A549 (cell line): ENCODE measurements at regions of chr21 and their contacts with region 1.

Region 1: GRCh38 chr21:42117229-42117966 is 46.3 kb downstream of the UMODL1 start:
- DNase-seq: peak; percentile 57 to 60
- ATAC-seq: peak; percentile 83 to 89
- H3K4me3 ChIP-seq: no peak overlapping the region
- H3K27ac ChIP-seq: no peak overlapping the region
- H3K4me1 ChIP-seq: peaks cover 7% of the 10 kb centered on the region; the same call in 1 of the 3 replicates
- CTCF ChIP-seq: peak; percentile 67
- EP300 ChIP-seq: no peak
- POLR2A ChIP-seq: no peak
- RAD21 ChIP-seq: peak; percentile 72 to 76

Region 2: GRCh38 chr21:41816220-41817165 is 300.9 kb before region 1 on chr21:
- CTCF ChIA-PET with region 1: interaction called, 24 read pairs
- POLR2A ChIA-PET with region 1: no interaction called
- DNase-seq: peak; percentile 19 to 40
- ATAC-seq: peak; percentile 87 to 93
- H3K4me3 ChIP-seq: no peak overlapping the region
- H3K27ac ChIP-seq: no peak overlapping the region
- H3K4me1 ChIP-seq: no peaks in the 10 kb centered on the region
- CTCF ChIP-seq: peak; percentile 45
- EP300 ChIP-seq: no peak
- POLR2A ChIP-seq: no peak
- RAD21 ChIP-seq: peak; percentile 45 to 65; a peak in 4 of 5 replicates

Region 3: GRCh38 chr21:42164064-42164789 is 46.8 kb after region 1 on chr21:
- CTCF ChIA-PET with region 1: no interaction called
- POLR2A ChIA-PET with region 1: no interaction called
- DNase-seq: peak in 1 of 2 experiments; percentile 24
- ATAC-seq: peak; percentile 81 to 85; a peak in 5 of 6 replicates
- H3K4me3 ChIP-seq: no peak overlapping the region
- H3K27ac ChIP-seq: no peak overlapping the region
- H3K4me1 ChIP-seq: no peaks in the 10 kb centered on the region
- CTCF ChIP-seq: peak; percentile 42
- EP300 ChIP-seq: no peak
- POLR2A ChIP-seq: no peak
- RAD21 ChIP-seq: peak; percentile 60 to 68

Region 4: GRCh38 chr21:42614811-42615659 is 497.6 kb after region 1 on chr21:
- CTCF ChIA-PET with region 1: no interaction called
- POLR2A ChIA-PET with region 1: no interaction called
- DNase-seq: peak; percentile 25 to 50
- ATAC-seq: peak; percentile 77 to 81
- H3K4me3 ChIP-seq: no peak overlapping the region
- H3K27ac ChIP-seq: no peak overlapping the region
- H3K4me1 ChIP-seq: peaks cover 6% of the 10 kb centered on the region; the same call in 1 of the 3 replicates
- CTCF ChIP-seq: no peak
- EP300 ChIP-seq: no peak
- POLR2A ChIP-seq: no peak
- RAD21 ChIP-seq: no peak

Region 5: DNA sequence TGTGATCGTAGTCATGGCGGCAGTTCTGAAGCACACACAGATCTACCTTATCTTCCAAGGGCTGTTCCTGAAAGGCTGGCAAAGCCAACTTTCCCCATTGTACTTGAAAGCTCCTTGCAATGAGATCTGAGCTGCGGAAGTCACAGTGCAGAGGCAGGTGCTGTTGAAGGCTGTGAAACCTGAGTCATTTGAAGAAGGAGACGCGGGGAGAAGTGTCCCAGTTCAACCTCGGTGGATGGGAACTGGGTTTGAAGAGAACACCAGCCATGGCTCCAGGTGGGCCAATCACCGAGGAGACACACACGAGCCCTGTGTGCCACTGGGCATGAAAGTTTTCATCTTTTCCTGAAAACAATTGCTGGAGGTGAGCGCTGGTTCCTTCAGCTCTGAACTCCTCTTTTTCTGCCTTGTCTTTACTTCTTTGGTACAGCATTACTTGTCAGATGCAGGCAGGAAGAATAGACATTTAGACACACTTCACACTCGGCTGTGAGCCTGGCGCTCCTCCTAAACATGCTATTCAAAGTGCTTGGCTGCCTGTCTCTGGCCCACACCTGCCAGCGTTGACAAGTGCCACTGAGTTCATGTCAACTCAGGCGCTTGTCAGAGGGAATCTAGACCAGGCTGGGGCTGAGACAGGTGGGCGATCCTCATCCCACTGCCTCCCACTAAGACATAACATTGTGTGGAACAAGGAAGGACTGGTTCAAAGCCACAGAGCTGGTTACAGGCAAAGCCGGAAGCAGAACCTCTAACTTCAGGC is 510.3 kb after region 1 on chr21:
- CTCF ChIA-PET with region 1: no interaction called
- POLR2A ChIA-PET with region 1: no interaction called
- DNase-seq: no peak
- ATAC-seq: no peak
- H3K4me3 ChIP-seq: no peak overlapping the region
- H3K27ac ChIP-seq: no peak overlapping the region
- H3K4me1 ChIP-seq: peaks cover 9% of the 10 kb centered on the region; the same call in 1 of the 3 replicates
- CTCF ChIP-seq: no peak
- EP300 ChIP-seq: no peak
- POLR2A ChIP-seq: no peak
- RAD21 ChIP-seq: no peak